Activated CD8-positive, alpha-beta memory T cell treated with anti-CD3 and anti-CD28 coated beads, Interleukin-2, amount 10 ng/mL, durations not matched to agents 7 days and 5 days (primary cell): ENCODE measurements at regions of chr3 and their contacts with region 1.

Region 1: GRCh38 chr3:33131331-33132018 is 17.7 kb downstream of the CRTAP start:
- DNase-seq: peak; percentile 54
- ATAC-seq: peak; percentile 73
- H3K4me3 Mint-ChIP-seq: no peak overlapping the region
- H3K27ac Mint-ChIP-seq: no peak overlapping the region
- H3K4me1 Mint-ChIP-seq: peaks cover 6% of the 10 kb centered on the region
- H3K27me3 Mint-ChIP-seq: no peaks in the 10 kb centered on the region

Region 2: GRCh38 chr3:33103034-33103433 is 28.4 kb before region 1 on chr3:
- CTCF ChIA-PET with region 1: no interaction called
- DNase-seq: no peak
- ATAC-seq: no peak
- H3K4me3 Mint-ChIP-seq: no peak overlapping the region
- H3K27ac Mint-ChIP-seq: no peak overlapping the region
- H3K4me1 Mint-ChIP-seq: peaks cover 2% of the 10 kb centered on the region
- H3K27me3 Mint-ChIP-seq: peaks cover 2% of the 10 kb centered on the region

Region 3: DNA sequence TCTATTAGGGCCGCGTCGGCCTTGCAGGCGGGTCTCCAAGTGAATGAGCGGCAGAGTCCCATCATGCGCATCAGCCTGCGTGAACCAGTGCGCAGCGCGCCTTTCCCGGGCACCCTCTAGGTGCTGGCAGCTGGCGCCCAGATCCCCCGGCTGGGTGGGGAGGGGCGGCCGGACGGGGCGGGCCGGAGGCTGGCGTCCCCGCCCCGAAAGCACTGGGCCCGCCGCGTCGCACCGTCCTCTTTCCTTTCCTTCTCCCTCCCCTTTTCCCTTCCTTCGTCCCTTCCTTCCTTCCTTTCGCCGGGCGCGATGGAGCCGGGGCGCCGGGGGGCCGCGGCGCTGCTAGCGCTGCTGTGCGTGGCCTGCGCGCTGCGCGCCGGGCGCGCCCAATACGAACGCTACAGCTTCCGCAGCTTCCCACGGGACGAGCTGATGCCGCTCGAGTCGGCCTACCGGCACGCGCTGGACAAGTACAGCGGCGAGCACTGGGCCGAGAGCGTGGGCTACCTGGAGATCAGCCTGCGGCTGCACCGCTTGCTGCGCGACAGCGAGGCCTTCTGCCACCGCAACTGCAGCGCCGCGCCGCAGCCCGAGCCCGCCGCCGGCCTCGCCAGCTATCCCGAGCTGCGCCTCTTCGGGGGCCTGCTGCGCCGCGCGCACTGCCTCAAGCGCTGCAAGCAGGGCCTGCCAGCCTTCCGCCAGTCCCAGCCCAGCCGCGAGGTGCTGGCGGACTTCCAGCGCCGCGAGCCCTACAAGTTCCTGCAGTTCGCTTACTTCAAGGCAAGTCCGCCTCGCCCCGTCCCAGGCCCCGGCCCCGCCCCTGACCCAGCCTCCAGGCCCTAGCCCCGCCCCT is 17.5 kb before region 1 on chr3 and contains the start of gene CRTAP:
- CTCF ChIA-PET with region 1: interaction called, 10 read pairs
- DNase-seq: peak; percentile 91
- ATAC-seq: peak; percentile 87
- H3K4me3 Mint-ChIP-seq: peak within 1 kb of the TSS; percentile 79
- H3K27ac Mint-ChIP-seq: peak within 1 kb of the TSS; percentile 82
- H3K4me1 Mint-ChIP-seq: peaks cover 47% of the 10 kb centered on the region
- H3K27me3 Mint-ChIP-seq: no peaks in the 10 kb centered on the region
- total RNA-seq, gene CRTAP: 28.0 to 40.3 TPM

Region 4: DNA sequence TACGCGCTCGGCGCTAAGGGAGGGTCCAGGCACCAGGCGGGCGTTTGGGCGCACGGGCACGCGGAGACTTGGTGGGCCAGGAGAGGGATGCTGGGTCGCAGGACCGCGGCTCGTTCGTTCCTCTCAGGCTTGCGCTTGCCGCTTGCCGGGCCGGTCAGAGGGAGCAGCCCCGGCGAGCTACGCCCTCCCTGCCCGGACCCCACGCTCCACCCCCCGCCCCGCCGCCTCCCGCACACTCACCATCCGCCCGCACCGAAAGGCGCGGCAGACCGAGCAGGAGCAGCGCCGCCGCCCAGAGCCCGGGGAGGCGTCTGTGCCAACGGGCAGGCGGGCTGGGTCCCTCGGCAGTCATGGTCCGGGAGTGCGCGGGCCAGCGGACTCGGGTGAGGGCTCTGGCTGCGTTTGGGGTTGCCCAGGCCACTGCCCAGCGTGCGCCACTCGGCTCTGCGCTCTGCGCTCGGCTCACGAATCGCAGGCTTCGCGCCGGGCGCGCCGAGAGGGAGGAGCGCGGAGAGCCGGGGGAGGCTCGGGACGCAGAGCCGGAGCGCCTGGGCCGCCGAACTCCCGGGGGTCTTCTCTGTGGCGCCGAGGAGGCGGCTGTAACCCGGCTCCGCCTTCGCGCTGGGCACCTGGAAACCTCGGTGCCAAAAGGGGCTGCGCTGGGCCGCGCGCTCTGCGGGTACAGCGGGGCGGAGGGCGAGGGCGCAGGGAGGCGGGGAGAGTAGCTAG is 87.1 kb after region 1 on chr3 and contains the start of gene SUSD5:
- CTCF ChIA-PET with region 1: no interaction called
- DNase-seq: no peak
- ATAC-seq: no peak
- H3K4me3 Mint-ChIP-seq: no peak within 1 kb of the TSS
- H3K27ac Mint-ChIP-seq: no peak within 1 kb of the TSS
- H3K4me1 Mint-ChIP-seq: peaks cover 5% of the 10 kb centered on the region
- H3K27me3 Mint-ChIP-seq: peaks cover 71% of the 10 kb centered on the region
- total RNA-seq, gene SUSD5: not detected

Region 5: GRCh38 chr3:33401781-33402180 is 270.3 kb after region 1 on chr3:
- CTCF ChIA-PET with region 1: no interaction called
- DNase-seq: no peak
- ATAC-seq: no peak
- H3K4me3 Mint-ChIP-seq: no peak overlapping the region
- H3K27ac Mint-ChIP-seq: no peak overlapping the region
- H3K4me1 Mint-ChIP-seq: no peaks in the 10 kb centered on the region
- H3K27me3 Mint-ChIP-seq: no peaks in the 10 kb centered on the region

Region 6: GRCh38 chr3:33798411-33799201 is 667.1 kb after region 1 on chr3 and contains the start of gene PDCD6IP:
- CTCF ChIA-PET with region 1: interaction called, 11 read pairs
- DNase-seq: peak; percentile 93
- ATAC-seq: peak; percentile 91
- H3K4me3 Mint-ChIP-seq: peak within 1 kb of the TSS; percentile 94
- H3K27ac Mint-ChIP-seq: peak within 1 kb of the TSS; percentile 96
- H3K4me1 Mint-ChIP-seq: peaks cover 55% of the 10 kb centered on the region
- H3K27me3 Mint-ChIP-seq: peaks cover 4% of the 10 kb centered on the region
- total RNA-seq, gene PDCD6IP: 183 to 208 TPM